ENCODE measurements at regions of chr22 and their contacts with region 1.

Region 1: DNA sequence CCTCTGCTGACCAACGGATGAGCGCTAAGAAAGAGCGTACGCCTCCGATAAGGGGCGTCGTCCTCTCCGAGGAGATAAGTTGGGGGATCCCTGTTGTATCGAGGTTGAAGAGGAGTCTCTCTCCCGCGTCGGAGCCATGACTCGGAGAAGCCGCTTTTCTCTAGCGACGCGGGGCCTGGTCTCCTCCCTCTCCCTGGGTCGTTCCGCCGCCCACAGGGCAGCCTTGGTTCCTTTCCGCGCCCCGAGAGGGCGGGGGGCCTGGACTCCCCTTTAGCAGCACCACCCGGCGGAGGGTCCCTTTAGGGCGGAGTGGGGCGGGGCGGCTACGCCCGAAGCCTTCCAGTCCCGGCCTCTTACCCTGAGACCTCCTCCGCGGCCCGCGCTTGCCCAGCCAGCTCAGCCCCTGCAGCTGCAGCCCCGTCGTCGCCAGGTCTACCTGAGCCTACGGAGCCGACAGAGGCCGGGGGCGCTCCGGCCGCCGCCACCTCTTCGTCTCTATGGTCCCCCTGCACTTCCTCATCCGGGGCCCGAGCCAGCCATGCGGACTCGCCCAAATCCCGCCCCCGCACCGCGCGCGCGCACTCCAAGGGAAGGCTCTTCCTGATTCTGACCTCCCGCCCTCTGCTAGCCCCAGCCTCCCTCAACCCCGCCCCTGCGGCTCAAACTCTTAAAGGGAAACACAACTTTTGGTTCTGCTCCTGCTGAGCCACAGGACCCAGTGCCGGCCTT is at the start of gene PRR14L:
- DNase-seq: peak; percentile 97 to 99 (median 98)
- H3K4me3 ChIP-seq: peak within 1 kb of the TSS; percentile 43 to 97 (median 72)
- H3K27ac ChIP-seq: peak within 1 kb of the TSS in 4 of 5 donors; percentile 65 to 88 (median 76)
- H3K4me1 ChIP-seq: peaks cover 32 to 42% of the 10 kb centered on the region in 2 donors
- H3K27me3 ChIP-seq: no peaks in the 10 kb centered on the region
- CTCF ChIP-seq: no peak
- POLR2A ChIP-seq: peak; percentile 72 to 88
- total RNA-seq, gene PRR14L: 15.7 to 53.6 (median 37.0) TPM

Region 2: GRCh38 chr22:31230871-31231621 is 518.8 kb before region 1 on chr22:
- intact Hi-C with region 1: no loop called
- DNase-seq: peak; percentile 52 to 88 (median 70)
- H3K4me3 ChIP-seq: no peak overlapping the region
- H3K27ac ChIP-seq: peak overlapping the region in 4 of 5 donors; percentile 64 to 79 (median 76)
- H3K4me1 ChIP-seq: peaks cover 19 to 48% of the 10 kb centered on the region in 2 donors
- H3K27me3 ChIP-seq: no peaks in the 10 kb centered on the region
- CTCF ChIP-seq: peak; percentile 49 to 87 (median 80)
- POLR2A ChIP-seq: no peak

Region 3: GRCh38 chr22:31661851-31662656 is 87.7 kb before region 1 on chr22 and contains the start of gene PISD:
- intact Hi-C with region 1: loop called in 1 of 2 experiments (anchors 5 kb)
- DNase-seq: peak; percentile 95 to 98 (median 96)
- H3K4me3 ChIP-seq: peak within 1 kb of the TSS; percentile 62 to 92 (median 64)
- H3K27ac ChIP-seq: peak within 1 kb of the TSS; percentile 37 to 91 (median 67)
- H3K4me1 ChIP-seq: peaks cover 12 to 14% of the 10 kb centered on the region in 2 donors
- H3K27me3 ChIP-seq: no peaks in the 10 kb centered on the region
- CTCF ChIP-seq: no peak
- POLR2A ChIP-seq: peak; percentile 65 to 85
- total RNA-seq, gene PISD: 42.1 to 99.5 (median 60.8) TPM

Region 4: GRCh38 chr22:31680861-31681341 is 68.9 kb before region 1 on chr22:
- intact Hi-C with region 1: loop called in 1 of 2 experiments (anchors 10 kb)
- DNase-seq: peak in 6 of 7 donors; percentile 31 to 76 (median 60)
- H3K4me3 ChIP-seq: no peak overlapping the region
- H3K27ac ChIP-seq: peak overlapping the region in 4 of 5 donors; percentile 69 to 86 (median 75)
- H3K4me1 ChIP-seq: peaks cover 14 to 26% of the 10 kb centered on the region in 2 donors
- H3K27me3 ChIP-seq: no peaks in the 10 kb centered on the region
- CTCF ChIP-seq: no peak
- POLR2A ChIP-seq: no peak

Region 5: GRCh38 chr22:31715147-31715778 is 34.5 kb before region 1 on chr22:
- intact Hi-C with region 1: no loop called
- DNase-seq: peak in 3 of 7 donors; percentile 11 to 25 (median 17)
- H3K4me3 ChIP-seq: no peak overlapping the region
- H3K27ac ChIP-seq: peak overlapping the region in 1 of 5 donors; percentile 1
- H3K4me1 ChIP-seq: peaks cover 0 to 12% of the 10 kb centered on the region in 2 donors
- H3K27me3 ChIP-seq: no peaks in the 10 kb centered on the region
- CTCF ChIP-seq: no peak
- POLR2A ChIP-seq: no peak

Measured in adrenal gland (tissue), 19 donors.